ENCODE measurements at regions of chr2 and their contacts with region 1.

Region 1: DNA sequence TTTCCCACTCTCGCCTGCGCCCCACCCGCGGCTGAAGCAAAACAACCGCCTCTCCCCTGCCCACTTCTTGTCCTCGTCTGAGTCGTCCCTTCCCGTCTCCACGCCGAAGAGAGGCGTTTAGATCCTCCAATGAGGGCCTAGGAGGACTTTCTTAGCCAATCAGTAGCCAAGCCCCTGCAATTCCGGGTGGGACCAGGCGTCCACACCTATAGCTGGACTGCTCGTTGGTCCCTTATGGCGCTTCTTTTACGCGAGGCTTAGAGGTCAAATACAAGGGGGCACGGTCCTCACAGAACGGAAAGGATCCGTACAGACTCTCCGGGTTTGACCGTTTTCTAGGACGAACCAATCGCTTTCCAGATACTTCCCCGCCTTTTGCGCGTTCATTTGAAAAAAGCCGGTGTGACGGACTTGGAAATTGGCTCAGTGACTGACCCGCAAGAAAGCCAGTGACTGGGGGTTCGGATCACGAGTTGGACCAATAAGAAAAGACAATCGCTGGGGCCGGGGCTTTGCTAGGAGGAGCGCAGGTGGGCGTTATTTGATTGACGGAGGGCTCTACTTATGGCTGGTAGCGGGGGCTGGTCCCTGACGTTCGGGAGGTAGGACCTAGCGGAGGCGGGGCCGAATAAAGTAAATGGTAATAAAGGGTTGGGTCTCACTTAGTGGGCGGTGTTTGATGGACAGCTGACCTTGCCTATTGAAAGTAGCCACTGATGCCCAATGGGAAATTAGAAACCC is 565 bp upstream of the PPM1B start:
- DNase-seq: peak; percentile 94
- H3K4me3 Mint-ChIP-seq: peak overlapping the region; percentile 97
- H3K27ac Mint-ChIP-seq: peak overlapping the region; percentile 99
- H3K4me1 Mint-ChIP-seq: peaks cover 41% of the 10 kb centered on the region
- H3K27me3 Mint-ChIP-seq: peaks cover 2% of the 10 kb centered on the region

Region 2: GRCh38 chr2:42810121-42810970 is 1357.8 kb before region 1 on chr2:
- intact Hi-C with region 1: loop called (anchors 1 kb)
- DNase-seq: peak; percentile 94
- H3K4me3 Mint-ChIP-seq: peak overlapping the region; percentile 89
- H3K27ac Mint-ChIP-seq: peak overlapping the region; percentile 100
- H3K4me1 Mint-ChIP-seq: peaks cover 20% of the 10 kb centered on the region
- H3K27me3 Mint-ChIP-seq: peaks cover 21% of the 10 kb centered on the region

Region 3: GRCh38 chr2:43995733-43996533 is 172.2 kb before region 1 on chr2 and contains the start of gene LRPPRC:
- intact Hi-C with region 1: loop called (anchors 1 kb)
- DNase-seq: peak; percentile 85
- H3K4me3 Mint-ChIP-seq: peak within 1 kb of the TSS; percentile 95
- H3K27ac Mint-ChIP-seq: peak within 1 kb of the TSS; percentile 94
- H3K4me1 Mint-ChIP-seq: peaks cover 45% of the 10 kb centered on the region
- H3K27me3 Mint-ChIP-seq: peaks cover 2% of the 10 kb centered on the region
- total RNA-seq, gene LRPPRC: 150 and 162 TPM in 2 replicates

Region 4: DNA sequence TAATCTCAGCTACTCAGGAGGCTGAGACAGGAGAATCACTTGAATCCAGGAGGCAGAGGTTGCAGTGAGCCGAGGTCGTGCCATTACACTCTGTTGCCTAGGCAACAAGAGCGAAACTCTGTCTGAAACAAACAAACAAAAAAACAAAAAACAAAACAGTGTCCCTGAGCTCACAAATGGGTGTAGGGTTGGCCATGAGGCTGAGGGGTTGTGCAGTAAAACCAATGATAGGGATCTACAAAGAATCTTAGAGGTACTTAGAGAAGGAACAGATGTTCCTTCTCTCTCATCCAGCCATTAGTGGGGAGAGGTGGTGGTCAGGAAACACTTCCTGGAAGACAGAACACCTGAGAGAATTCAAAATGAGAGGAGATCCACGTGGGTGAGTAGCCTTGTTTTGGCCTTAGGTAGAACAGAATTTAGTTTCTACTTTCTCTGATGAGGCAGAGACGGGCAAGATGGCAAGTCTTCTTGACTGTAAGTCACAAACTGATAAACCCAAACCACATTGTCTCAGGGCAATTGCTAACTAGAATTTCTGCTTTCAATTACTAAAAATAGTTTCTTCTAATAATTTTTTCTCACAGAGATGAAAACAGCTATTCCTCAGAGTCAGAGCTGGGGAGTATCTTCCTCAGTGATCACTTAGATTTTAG is 60.9 kb before region 1 on chr2:
- intact Hi-C with region 1: no loop called
- DNase-seq: no peak
- H3K4me3 Mint-ChIP-seq: no peak overlapping the region
- H3K27ac Mint-ChIP-seq: no peak overlapping the region
- H3K4me1 Mint-ChIP-seq: peaks cover 5% of the 10 kb centered on the region
- H3K27me3 Mint-ChIP-seq: peaks cover 13% of the 10 kb centered on the region

Region 5: DNA sequence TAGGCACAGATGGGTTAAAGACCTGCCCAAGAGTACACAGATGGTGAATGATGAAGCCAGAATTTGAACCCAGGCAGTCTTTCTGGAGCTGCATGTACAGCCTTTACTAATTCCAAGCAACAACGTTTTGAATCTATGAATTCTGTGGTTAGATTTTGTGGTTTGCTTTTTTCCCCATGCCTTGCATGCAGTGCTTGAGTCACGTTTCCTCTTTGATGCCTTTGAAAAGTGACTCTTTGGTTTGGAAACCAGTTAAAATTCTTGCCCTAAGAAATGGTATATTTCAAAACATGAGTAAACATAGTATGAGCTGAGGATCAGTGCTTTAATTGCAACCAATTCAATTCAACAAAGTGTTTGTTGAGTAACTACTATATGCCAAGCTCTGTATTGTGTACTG is 47.7 kb before region 1 on chr2:
- intact Hi-C with region 1: loop called (anchors 2 kb)
- DNase-seq: peak; percentile 1
- H3K4me3 Mint-ChIP-seq: no peak overlapping the region
- H3K27ac Mint-ChIP-seq: no peak overlapping the region
- H3K4me1 Mint-ChIP-seq: peaks cover 6% of the 10 kb centered on the region
- H3K27me3 Mint-ChIP-seq: peaks cover 2% of the 10 kb centered on the region

Region 6: GRCh38 chr2:44191739-44192138 is 23.6 kb after region 1 on chr2:
- intact Hi-C with region 1: loop called (anchors 1 kb)
- DNase-seq: no peak
- H3K4me3 Mint-ChIP-seq: no peak overlapping the region
- H3K27ac Mint-ChIP-seq: peak overlapping the region; percentile 79
- H3K4me1 Mint-ChIP-seq: peaks cover 32% of the 10 kb centered on the region
- H3K27me3 Mint-ChIP-seq: no peaks in the 10 kb centered on the region

Region 7: DNA sequence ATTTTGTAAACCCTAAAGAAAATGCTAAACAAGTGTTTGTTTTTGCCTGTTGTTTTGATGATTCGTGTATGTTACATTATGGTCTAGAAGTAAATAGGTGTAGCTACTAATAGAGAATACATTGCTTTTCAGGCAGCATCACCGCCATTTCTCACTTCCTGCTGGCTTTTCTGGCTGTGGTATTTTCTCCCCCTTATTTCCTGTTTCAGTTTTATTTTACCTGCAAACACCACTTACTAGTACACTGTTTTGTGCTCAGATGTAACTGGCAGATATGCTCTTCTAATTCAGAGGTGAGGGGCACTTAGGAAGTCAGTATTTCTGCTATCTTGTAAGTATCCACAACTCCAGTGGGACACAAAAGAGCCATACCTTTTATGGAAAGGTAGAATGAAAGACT is 69.1 kb after region 1 on chr2:
- intact Hi-C with region 1: loop called (anchors 2 kb)
- DNase-seq: peak; percentile 10
- H3K4me3 Mint-ChIP-seq: no peak overlapping the region
- H3K27ac Mint-ChIP-seq: no peak overlapping the region
- H3K4me1 Mint-ChIP-seq: peaks cover 16% of the 10 kb centered on the region
- H3K27me3 Mint-ChIP-seq: no peaks in the 10 kb centered on the region

Region 8: DNA sequence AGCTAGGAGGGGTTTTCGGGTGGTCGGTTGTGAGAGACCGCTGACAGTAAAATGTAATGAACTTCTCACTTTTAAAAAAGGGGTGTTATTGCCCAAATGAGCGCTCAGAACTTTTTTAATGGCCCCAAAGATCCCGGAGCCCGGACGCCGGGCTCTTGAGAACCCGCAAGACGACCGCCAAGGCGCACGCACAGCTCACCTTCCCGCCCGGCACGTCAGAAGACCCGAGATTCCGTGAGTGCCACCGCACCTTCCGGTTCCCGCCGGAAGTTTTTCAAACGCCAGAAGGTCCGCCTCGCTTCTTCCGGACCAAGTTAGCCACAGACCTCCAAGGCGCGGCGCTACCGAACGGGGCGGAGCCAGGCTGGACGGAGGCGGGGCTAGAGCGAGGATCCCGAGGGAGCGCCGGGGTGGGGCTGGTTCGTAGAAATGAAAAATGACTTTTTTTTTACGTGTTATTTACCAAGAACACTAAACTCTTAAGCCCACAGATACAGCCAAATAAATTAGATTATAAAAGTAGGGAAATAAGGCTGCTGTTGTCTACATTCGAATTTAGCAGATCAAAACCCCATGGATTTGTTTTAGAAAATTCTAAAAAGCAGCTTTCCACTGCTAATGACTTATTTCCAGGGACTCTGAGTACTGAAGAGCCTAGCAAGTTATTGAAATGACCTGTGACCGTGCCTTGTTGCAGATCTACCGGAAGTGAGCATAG is 1443.1 kb after region 1 on chr2 and contains the start of gene SRBD1:
- intact Hi-C with region 1: loop called (anchors 5 kb)
- DNase-seq: peak; percentile 84
- H3K4me3 Mint-ChIP-seq: peak within 1 kb of the TSS; percentile 96
- H3K27ac Mint-ChIP-seq: peak within 1 kb of the TSS; percentile 92
- H3K4me1 Mint-ChIP-seq: peaks cover 27% of the 10 kb centered on the region
- H3K27me3 Mint-ChIP-seq: no peaks in the 10 kb centered on the region
- total RNA-seq, gene SRBD1: 15.2 and 18.3 TPM in 2 replicates

Measured in activated T-helper 1 cell treated with anti-CD3 and anti-CD28 coated beads, Interleukin-12 subunit alpha, Interleukin-12 subunit beta, Interleukin-2, Interleukin-4 antibody, amounts not matched to agents 30 ng/mL and 10 ng/mL and 1 ng/mL, durations not matched to agents 14 hours and 24 hours and 36 hours (primary cell).